Naive thymus-derived CD4-positive, alpha-beta T cell (primary cell): ENCODE measurements at regions of chr17 and their contacts with region 1.

Region 1: DNA sequence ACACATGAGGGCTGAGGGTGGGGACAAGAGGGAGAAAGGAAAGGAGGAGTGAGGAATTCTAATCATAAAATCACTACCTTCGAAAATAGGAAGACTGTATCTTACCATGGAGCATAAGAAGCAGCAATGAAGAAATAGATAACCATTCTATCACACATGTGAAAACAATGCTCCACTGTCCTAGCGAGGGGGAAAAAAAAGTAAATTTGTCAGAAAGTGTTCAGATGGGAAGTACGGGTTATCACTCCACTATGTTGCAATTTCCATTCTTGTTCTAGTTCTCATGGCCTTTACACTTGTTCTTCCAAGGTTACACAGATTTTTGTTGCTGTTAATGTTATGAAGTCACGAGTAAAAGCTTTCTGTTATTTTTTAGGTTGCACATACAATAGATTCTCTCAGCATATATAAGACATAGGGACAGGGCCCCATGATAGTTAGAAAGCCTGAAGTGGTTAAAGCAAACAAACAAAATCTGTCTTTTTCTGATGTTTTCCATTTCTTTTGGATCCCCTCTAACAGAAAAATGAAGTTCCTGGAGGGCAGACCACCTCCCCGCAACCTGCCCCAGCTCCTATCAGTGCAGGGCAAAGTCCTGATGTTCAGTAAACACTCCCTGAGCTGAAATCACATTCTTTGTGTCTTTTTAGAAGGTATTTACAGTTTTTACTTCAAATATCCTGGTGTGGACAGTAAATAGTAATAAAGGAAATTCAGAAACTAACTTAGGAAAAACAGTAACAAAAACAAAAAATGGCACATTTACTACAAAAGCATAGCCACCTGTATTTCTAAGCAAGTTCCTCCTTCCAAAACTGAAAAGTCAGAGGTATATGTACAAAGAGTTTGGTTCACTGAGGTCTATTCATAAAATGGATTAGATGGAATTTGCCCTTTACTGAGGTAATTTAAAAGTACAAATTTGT is 13.7 kb downstream of the MMD start:
- DNase-seq: no peak
- ATAC-seq: no peak
- H3K4me3 ChIP-seq: no peak overlapping the region
- H3K4me3 Mint-ChIP-seq: no peak overlapping the region
- H3K27ac ChIP-seq: no peak overlapping the region
- H3K27ac Mint-ChIP-seq: peak overlapping the region in 1 of 9 donors; percentile 12
- H3K4me1 ChIP-seq: no peaks in the 10 kb centered on the region
- H3K4me1 Mint-ChIP-seq: no peaks in the 10 kb centered on the region
- H3K27me3 ChIP-seq: no peaks in the 10 kb centered on the region
- H3K27me3 Mint-ChIP-seq: no peaks in the 10 kb centered on the region

Region 2: GRCh38 chr17:55388842-55389241 is 19.1 kb before region 1 on chr17:
- CTCF ChIA-PET with region 1: no interaction called
- POLR2A ChIA-PET with region 1: no interaction called
- intact Hi-C with region 1: loop called in 1 of 2 experiments (anchors 2 kb)
- DNase-seq: no peak
- ATAC-seq: no peak
- H3K4me3 ChIP-seq: no peak overlapping the region
- H3K4me3 Mint-ChIP-seq: no peak overlapping the region
- H3K27ac ChIP-seq: no peak overlapping the region
- H3K27ac Mint-ChIP-seq: no peak overlapping the region
- H3K4me1 ChIP-seq: no peaks in the 10 kb centered on the region
- H3K4me1 Mint-ChIP-seq: peaks cover 0 to 1% (median 0%) of the 10 kb centered on the region in 7 donors
- H3K27me3 ChIP-seq: no peaks in the 10 kb centered on the region
- H3K27me3 Mint-ChIP-seq: peaks cover 0 to 13% (median 0%) of the 10 kb centered on the region in 5 donors

Region 3: DNA sequence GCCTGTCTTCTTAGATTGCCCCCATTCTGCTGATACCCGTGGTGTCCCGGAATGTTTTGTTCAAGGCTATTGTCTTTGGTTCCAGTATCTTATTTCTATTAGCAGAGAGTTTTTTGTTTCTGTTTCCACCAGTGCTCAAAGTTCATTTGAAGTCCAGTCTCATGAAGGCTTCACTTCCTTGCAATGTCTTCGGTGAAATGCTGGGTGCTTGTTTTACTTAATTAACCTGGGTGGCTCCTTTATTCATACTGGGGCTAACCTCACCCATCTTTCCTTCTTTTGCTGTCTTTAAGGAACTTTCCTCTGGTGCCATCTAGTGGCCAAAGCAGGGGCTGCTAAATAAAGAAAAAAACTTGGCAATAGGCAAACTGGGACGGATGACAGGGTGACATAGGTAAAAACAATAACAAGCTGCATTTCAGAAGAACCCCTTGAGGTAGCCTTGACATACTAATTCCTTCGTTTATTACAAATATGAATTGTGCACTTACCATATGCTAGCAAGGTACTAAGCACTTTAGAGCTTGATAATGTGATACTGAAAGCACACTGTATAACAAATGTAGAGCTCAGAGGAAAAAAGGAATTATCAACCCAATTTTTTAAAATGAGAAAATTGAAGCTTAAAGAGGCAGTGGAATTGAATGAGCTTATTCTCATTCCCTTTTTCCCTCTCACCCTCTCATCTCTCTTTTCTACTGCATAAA is 106.1 kb after region 1 on chr17:
- CTCF ChIA-PET with region 1: no interaction called
- POLR2A ChIA-PET with region 1: no interaction called
- intact Hi-C with region 1: loop called in 1 of 2 experiments (anchors 5 kb)
- DNase-seq: peak; percentile 40 to 73 (median 59)
- ATAC-seq: peak; percentile 78
- H3K4me3 ChIP-seq: no peak overlapping the region
- H3K4me3 Mint-ChIP-seq: no peak overlapping the region
- H3K27ac ChIP-seq: no peak overlapping the region
- H3K27ac Mint-ChIP-seq: no peak overlapping the region
- H3K4me1 ChIP-seq: no peaks in the 10 kb centered on the region
- H3K4me1 Mint-ChIP-seq: peaks cover 0 to 6% (median 0%) of the 10 kb centered on the region in 7 donors
- H3K27me3 ChIP-seq: no peaks in the 10 kb centered on the region
- H3K27me3 Mint-ChIP-seq: peaks cover 0 to 11% (median 8%) of the 10 kb centered on the region in 5 donors